Right lobe of liver (tissue), 6 donors: ENCODE measurements at regions of chr11 and their contacts with region 1.

Region 1: DNA sequence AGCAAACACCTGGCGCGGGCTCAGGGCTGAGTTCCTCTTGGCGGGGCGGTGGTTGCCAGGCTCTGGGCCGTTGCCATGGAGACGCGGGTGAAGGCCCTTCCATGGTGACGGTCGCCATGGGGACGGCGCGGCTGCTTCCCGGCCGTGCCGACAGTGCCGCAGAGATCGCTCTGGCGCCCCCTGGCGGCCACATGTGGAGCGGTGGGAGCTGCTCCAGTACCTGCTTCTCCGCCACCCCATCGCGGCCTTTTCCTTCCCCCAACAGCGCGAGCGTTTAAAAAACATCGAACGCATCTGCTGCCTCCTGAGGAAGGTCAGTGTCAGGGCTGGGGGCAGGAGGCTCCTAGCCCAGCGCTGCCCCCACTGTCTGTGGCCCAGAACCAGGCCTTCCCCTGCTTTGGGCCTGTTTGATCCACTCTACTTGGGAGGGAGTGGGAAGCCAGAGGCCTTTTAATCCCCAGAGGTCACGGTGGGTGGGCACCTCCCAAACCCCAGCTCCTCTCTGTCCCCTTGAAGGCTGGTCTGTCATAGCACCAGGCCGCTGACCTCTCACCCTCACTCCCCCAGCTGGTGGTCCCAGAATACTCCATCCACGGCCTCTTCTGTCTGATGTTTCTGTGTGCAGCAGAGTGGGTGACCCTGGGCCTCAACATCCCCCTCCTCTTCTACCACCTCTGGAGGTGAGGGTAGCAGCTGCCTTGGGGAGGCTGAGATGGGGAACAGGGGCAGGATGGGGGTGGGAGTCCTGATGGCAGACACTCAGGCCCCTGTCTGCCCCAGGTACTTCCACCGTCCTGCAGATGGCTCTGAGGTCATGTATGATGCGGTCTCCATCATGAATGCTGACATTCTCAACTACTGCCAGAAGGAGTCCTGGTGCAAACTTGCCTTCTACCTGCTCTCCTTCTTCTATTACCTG is 4.8 kb downstream of the CNIH2 start:
- DNase-seq: peak; percentile 100
- ATAC-seq: peak; percentile 89 to 96 (median 90)
- H3K4me3 ChIP-seq: no peak overlapping the region
- H3K27ac ChIP-seq: no peak overlapping the region
- H3K4me1 ChIP-seq: peaks cover 0 to 5% (median 1%) of the 10 kb centered on the region in 4 donors
- H3K27me3 ChIP-seq: no peaks in the 10 kb centered on the region
- CTCF ChIP-seq: peak; percentile 98 to 99 (median 99)
- POLR2A ChIP-seq: no peak

Region 2: GRCh38 chr11:66222358-66223149 is 60.2 kb before region 1 on chr11:
- intact Hi-C with region 1: loop called (anchors 10 kb)
- DNase-seq: peak; percentile 90 to 93 (median 92)
- ATAC-seq: peak; percentile 99 to 100 (median 100)
- H3K4me3 ChIP-seq: no peak overlapping the region
- H3K27ac ChIP-seq: no peak overlapping the region
- H3K4me1 ChIP-seq: no peaks in the 10 kb centered on the region
- H3K27me3 ChIP-seq: no peaks in the 10 kb centered on the region
- CTCF ChIP-seq: peak; percentile 98 to 99 (median 99)
- POLR2A ChIP-seq: no peak

Region 3: GRCh38 chr11:66251809-66252208 is 30.9 kb before region 1 on chr11:
- intact Hi-C with region 1: no loop called
- DNase-seq: no peak
- ATAC-seq: no peak
- H3K4me3 ChIP-seq: no peak overlapping the region
- H3K27ac ChIP-seq: no peak overlapping the region
- H3K4me1 ChIP-seq: no peaks in the 10 kb centered on the region
- H3K27me3 ChIP-seq: no peaks in the 10 kb centered on the region
- CTCF ChIP-seq: no peak
- POLR2A ChIP-seq: no peak